ENCODE measurements at regions of chr18 and their contacts with region 1.

Region 1: GRCh38 chr18:35756506-35757117 is 175.1 kb downstream of the GALNT1 start:
- DNase-seq: peak; percentile 45
- ATAC-seq: peak; percentile 91
- H3K4me3 ChIP-seq: no peak overlapping the region
- H3K27ac ChIP-seq: no peak overlapping the region
- H3K4me1 ChIP-seq: peaks cover 12% of the 10 kb centered on the region
- H3K27me3 ChIP-seq: peaks cover 4 to 26% of the 10 kb centered on the region in 2 experiments; a peak in 3 of 5 replicates
- CTCF ChIP-seq: peak; percentile 78
- EP300 ChIP-seq: no peak
- POLR2A ChIP-seq: no peak
- RAD21 ChIP-seq: peak; percentile 75

Region 2: GRCh38 chr18:35441857-35442595 is 314.6 kb before region 1 on chr18:
- CTCF ChIA-PET with region 1: no interaction called
- POLR2A ChIA-PET with region 1: no interaction called
- in situ Hi-C with region 1: no loop called
- intact Hi-C with region 1: no loop called
- DNase-seq: no peak
- ATAC-seq: peak; percentile 44
- H3K4me3 ChIP-seq: no peak overlapping the region
- H3K27ac ChIP-seq: no peak overlapping the region
- H3K4me1 ChIP-seq: peaks cover 18% of the 10 kb centered on the region
- H3K27me3 ChIP-seq: peaks cover 0 to 2% of the 10 kb centered on the region in 2 experiments; a peak in 2 of 5 replicates
- CTCF ChIP-seq: no peak
- EP300 ChIP-seq: no peak
- POLR2A ChIP-seq: no peak
- RAD21 ChIP-seq: no peak

Region 3: GRCh38 chr18:35949903-35950627 is 193.5 kb after region 1 on chr18:
- CTCF ChIA-PET with region 1: interaction called, 12 read pairs
- POLR2A ChIA-PET with region 1: no interaction called
- in situ Hi-C with region 1: loop called (anchors 5 kb)
- intact Hi-C with region 1: loop called (anchors 1 kb)
- DNase-seq: peak; percentile 56
- ATAC-seq: peak; percentile 90
- H3K4me3 ChIP-seq: peak overlapping the region; percentile 59 to 81 (median 65)
- H3K27ac ChIP-seq: no peak overlapping the region
- H3K4me1 ChIP-seq: peaks cover 11% of the 10 kb centered on the region
- H3K27me3 ChIP-seq: peaks cover 0 to 8% of the 10 kb centered on the region in 2 experiments; a peak in 3 of 5 replicates
- CTCF ChIP-seq: peak; percentile 86
- EP300 ChIP-seq: no peak
- POLR2A ChIP-seq: no peak
- RAD21 ChIP-seq: peak; percentile 63

Region 4: DNA sequence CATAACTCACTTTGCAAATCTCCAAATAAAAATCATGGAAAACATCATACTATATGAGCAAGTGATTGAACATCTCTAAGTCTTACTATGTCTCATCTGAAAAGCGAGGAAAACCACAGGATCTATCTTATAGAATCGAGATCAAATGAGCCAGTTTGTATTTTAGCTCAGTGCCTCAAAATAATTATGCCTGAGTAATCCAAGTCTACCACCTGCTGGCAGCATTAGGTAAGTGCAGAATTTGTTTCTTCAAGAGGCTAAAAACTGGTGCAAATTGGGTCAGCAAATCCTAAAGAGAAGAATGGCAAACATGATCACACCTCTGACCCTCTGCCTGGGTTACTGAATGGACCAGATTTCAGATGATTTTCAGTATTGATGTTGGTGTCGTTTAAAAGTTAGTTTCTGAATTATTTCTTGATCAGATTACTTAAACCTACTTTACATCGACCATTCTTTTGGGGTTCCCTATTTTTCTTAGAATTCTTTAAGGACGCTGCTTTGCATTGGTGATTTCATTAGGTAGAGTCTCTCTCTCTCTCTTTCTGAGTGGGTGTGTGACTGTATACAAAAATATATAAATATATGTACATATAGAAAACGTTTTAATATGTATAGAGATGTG is 528.2 kb after region 1 on chr18:
- CTCF ChIA-PET with region 1: no interaction called
- POLR2A ChIA-PET with region 1: no interaction called
- in situ Hi-C with region 1: loop called (anchors 5 kb)
- intact Hi-C with region 1: loop called (anchors 10 kb)
- DNase-seq: peak; percentile 62
- ATAC-seq: peak; percentile 53
- H3K4me3 ChIP-seq: no peak overlapping the region
- H3K27ac ChIP-seq: no peak overlapping the region
- H3K4me1 ChIP-seq: 0 out of 2 replicates have a peak, but pooled peaks cover 7% of the 10 kb centered on the region
- H3K27me3 ChIP-seq: no peaks in the 10 kb centered on the region
- CTCF ChIP-seq: peak; percentile 86
- EP300 ChIP-seq: no peak
- POLR2A ChIP-seq: no peak
- RAD21 ChIP-seq: peak; percentile 81